Endothelial cell of umbilical vein (primary cell): ENCODE measurements at regions of chr17 and their contacts with region 1.

Region 1: GRCh38 chr17:16521070-16521727 is 29.2 kb upstream of the LRRC75A start:
- DNase-seq: peak; percentile 79
- H3K4me3 ChIP-seq: no peak overlapping the region
- H3K27ac ChIP-seq: peak overlapping the region; percentile 31
- H3K4me1 ChIP-seq: peaks cover 13% of the 10 kb centered on the region
- H3K27me3 ChIP-seq: peaks cover 0 to 2% of the 10 kb centered on the region in 2 experiments
- CTCF ChIP-seq: peak; percentile 80 to 85
- POLR2A ChIP-seq: no peak

Region 2: DNA sequence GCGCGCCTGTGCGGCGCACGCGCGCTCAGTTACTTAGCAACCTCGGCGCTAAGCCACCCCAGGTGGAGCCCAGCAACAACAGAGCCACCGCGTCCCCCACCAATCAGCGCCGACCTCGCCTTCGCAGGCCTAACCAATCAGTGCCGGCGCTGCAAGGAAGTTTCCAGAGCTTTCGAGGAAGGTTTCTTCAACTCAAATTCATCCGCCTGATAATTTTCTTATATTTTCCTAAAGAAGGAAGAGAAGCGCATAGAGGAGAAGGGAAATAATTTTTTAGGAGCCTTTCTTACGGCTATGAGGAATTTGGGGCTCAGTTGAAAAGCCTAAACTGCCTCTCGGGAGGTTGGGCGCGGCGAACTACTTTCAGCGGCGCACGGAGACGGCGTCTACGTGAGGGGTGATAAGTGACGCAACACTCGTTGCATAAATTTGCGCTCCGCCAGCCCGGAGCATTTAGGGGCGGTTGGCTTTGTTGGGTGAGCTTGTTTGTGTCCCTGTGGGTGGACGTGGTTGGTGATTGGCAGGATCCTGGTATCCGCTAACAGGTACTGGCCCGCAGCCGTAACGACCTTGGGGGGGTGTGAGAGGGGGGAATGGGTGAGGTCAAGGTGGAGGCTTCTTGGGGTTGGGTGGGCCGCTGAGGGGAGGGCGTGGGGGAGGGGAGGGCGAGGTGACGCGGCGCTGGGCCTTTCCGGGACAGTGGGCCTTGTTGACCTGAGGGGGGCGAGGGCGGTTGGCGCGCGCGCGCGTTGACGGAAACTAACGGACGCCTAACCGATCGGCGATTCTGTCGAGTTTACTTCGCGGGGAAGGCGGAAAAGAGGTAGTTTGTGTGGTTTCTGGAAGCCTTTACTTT is 140.3 kb before region 1 on chr17 and contains the start of gene UBB:
- CTCF ChIA-PET with region 1: interaction called, 19 read pairs
- POLR2A ChIA-PET with region 1: interaction called, 4 read pairs
- dilution Hi-C with region 1: no loop called
- intact Hi-C with region 1: loop called (anchors 1 kb)
- DNase-seq: peak; percentile 98
- H3K4me3 ChIP-seq: peak within 1 kb of the TSS; percentile 65 to 90 (median 88)
- H3K27ac ChIP-seq: peak within 1 kb of the TSS; percentile 97
- H3K4me1 ChIP-seq: peaks cover 4% of the 10 kb centered on the region
- H3K27me3 ChIP-seq: no peaks in the 10 kb centered on the region
- CTCF ChIP-seq: peak in 1 of 2 donors; percentile 22
- POLR2A ChIP-seq: peak; percentile 100
- total RNA-seq, gene UBB: 1,183 and 1,294 TPM in 2 replicates

Region 3: DNA sequence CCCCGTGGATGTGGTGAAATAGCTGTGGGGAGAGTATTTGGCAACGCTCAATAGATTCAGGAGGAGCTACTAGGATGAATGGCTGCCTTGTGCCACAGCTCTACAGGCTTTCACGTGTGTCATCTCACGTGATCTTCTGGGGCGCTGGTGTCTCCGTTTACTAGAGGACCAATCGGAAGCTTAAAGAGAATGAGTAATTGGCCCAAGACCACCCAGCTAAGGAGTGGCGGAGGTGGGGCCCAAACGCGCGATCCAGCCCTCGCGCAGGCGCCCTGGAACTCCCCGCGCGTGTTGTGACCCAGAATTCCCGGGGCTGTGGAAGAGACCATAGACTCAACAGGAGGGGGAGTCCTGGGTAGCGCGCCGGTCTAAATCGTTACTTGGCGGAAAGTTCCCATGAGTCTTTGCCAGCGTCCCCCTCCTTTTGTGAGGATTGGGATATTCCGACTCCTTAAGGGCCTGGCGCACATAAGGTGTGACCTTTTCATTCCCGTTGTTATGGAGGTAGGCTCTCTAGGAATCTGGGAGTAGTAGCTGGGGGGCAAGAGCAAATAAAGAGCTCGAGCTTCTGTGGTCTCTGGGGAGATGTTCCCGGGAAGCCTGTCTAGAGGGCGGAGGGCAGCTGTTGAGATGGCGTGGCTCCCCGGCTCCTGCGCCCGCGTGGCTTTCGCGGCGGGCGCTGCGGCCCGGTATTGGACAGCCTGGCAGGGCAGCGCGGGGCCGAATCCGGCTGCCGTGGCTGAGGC is 82.5 kb before region 1 on chr17:
- CTCF ChIA-PET with region 1: interaction called, 33 read pairs
- POLR2A ChIA-PET with region 1: interaction called, 4 read pairs
- dilution Hi-C with region 1: no loop called
- intact Hi-C with region 1: no loop called
- DNase-seq: peak; percentile 100
- H3K4me3 ChIP-seq: peak overlapping the region; percentile 77 to 97 (median 89)
- H3K27ac ChIP-seq: peak overlapping the region; percentile 67
- H3K4me1 ChIP-seq: peaks cover 35% of the 10 kb centered on the region
- H3K27me3 ChIP-seq: no peaks in the 10 kb centered on the region
- CTCF ChIP-seq: no peak
- POLR2A ChIP-seq: peak; percentile 99

Region 4: GRCh38 chr17:16463358-16464302 is 57.6 kb before region 1 on chr17:
- CTCF ChIA-PET with region 1: interaction called, 87 read pairs
- POLR2A ChIA-PET with region 1: no interaction called
- dilution Hi-C with region 1: no loop called
- intact Hi-C with region 1: loop called (anchors 1 kb)
- DNase-seq: peak; percentile 70
- H3K4me3 ChIP-seq: no peak overlapping the region
- H3K27ac ChIP-seq: no peak overlapping the region
- H3K4me1 ChIP-seq: peaks cover 14% of the 10 kb centered on the region
- H3K27me3 ChIP-seq: no peaks in the 10 kb centered on the region
- CTCF ChIP-seq: peak; percentile 36 to 69
- POLR2A ChIP-seq: no peak

Region 5: DNA sequence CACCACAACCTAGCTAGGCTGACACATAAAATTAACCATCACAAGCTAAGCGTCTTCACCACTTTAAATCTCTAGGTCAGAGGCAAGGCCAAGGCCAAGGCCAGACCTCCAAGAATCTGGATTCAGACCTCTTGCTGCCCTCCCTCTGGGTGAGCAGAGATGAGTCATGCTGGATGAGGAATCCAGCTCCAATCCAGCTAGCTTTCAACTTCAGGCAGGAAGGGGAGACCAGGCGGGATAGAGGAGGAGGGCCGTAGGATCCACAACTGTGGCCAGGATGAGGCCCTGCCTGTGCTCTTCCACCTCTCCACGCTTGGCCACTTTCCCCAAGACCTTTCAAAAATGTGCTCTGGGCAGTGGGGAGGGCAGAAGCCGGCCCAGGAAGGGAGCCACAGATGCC is 43.9 kb before region 1 on chr17:
- CTCF ChIA-PET with region 1: interaction called, 15 read pairs
- POLR2A ChIA-PET with region 1: no interaction called
- dilution Hi-C with region 1: no loop called
- intact Hi-C with region 1: no loop called
- DNase-seq: peak; percentile 84
- H3K4me3 ChIP-seq: no peak overlapping the region
- H3K27ac ChIP-seq: peak overlapping the region; percentile 60
- H3K4me1 ChIP-seq: peaks cover 8% of the 10 kb centered on the region
- H3K27me3 ChIP-seq: no peaks in the 10 kb centered on the region
- CTCF ChIP-seq: no peak
- POLR2A ChIP-seq: no peak

Region 6: GRCh38 chr17:16491703-16492612 is 29.2 kb before region 1 on chr17 and contains the start of gene LRRC75A:
- CTCF ChIA-PET with region 1: interaction called, 15 read pairs
- POLR2A ChIA-PET with region 1: no interaction called
- dilution Hi-C with region 1: no loop called
- intact Hi-C with region 1: loop called (anchors 2 kb)
- DNase-seq: peak; percentile 33
- H3K4me3 ChIP-seq: peak within 1 kb of the TSS; percentile 8 to 47 (median 14)
- H3K27ac ChIP-seq: no peak within 1 kb of the TSS
- H3K4me1 ChIP-seq: peaks cover 15% of the 10 kb centered on the region
- H3K27me3 ChIP-seq: peaks cover 24 to 33% of the 10 kb centered on the region in 2 experiments
- CTCF ChIP-seq: peak in 1 of 2 donors; percentile 27
- POLR2A ChIP-seq: no peak
- total RNA-seq, gene LRRC75A: 2.9 and 3.7 TPM in 2 replicates

Region 7: DNA sequence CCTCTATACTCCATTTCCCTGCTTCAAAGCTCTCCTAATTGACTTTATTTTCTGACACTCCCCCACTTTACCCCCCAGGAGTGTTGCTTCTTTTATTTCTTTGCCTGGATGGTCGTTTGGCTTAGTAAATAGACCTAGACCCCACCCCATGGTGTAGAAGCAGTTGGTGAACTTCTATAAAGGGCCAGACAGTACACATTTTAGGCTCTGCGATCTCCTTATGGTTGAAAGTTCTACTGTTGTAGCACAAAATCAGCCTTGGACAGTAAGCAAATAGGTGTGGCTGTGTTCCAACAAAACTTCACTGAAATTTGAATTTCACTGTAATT is 15.9 kb after region 1 on chr17:
- CTCF ChIA-PET with region 1: interaction called, 22 read pairs
- POLR2A ChIA-PET with region 1: interaction called, 3 read pairs
- dilution Hi-C with region 1: no loop called
- intact Hi-C with region 1: no loop called
- DNase-seq: no peak
- H3K4me3 ChIP-seq: no peak overlapping the region
- H3K27ac ChIP-seq: no peak overlapping the region
- H3K4me1 ChIP-seq: peaks cover 2% of the 10 kb centered on the region
- H3K27me3 ChIP-seq: peaks cover 3 to 4% of the 10 kb centered on the region in 2 experiments
- CTCF ChIP-seq: no peak
- POLR2A ChIP-seq: no peak

Region 8: DNA sequence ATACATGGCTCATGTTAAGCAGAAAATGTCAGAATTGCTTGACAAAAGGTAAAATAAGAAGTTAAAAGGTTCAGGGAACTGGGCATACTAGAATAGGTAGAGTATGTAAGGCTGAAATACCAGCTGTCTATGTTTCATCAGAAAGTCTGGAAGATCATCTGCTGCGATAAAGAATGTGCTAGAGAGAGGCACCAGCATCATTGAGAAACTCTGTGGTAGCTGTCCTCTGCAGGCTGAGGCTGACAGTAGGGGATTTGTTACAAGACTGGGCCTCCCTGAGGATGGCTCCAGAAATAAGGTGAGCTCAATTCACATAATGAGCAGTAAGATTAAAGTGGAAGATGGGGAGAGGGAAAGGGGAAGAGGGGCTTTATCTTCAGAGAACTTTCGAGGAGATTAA is 52.3 kb after region 1 on chr17:
- CTCF ChIA-PET with region 1: no interaction called
- POLR2A ChIA-PET with region 1: no interaction called
- dilution Hi-C with region 1: no loop called
- intact Hi-C with region 1: no loop called
- DNase-seq: no peak
- H3K4me3 ChIP-seq: no peak overlapping the region
- H3K27ac ChIP-seq: no peak overlapping the region
- H3K4me1 ChIP-seq: peaks cover 2% of the 10 kb centered on the region
- H3K27me3 ChIP-seq: peaks cover 0 to 5% of the 10 kb centered on the region in 2 experiments
- CTCF ChIP-seq: no peak
- POLR2A ChIP-seq: no peak